Psoas muscle (tissue), 8 donors: ENCODE measurements at regions of chr1 and their contacts with region 1.

Region 1: GRCh38 chr1:207935166-207935583 is 24.2 kb upstream of the CD34 start:
- DNase-seq: no peak
- ATAC-seq: no peak
- H3K4me3 ChIP-seq: no peak overlapping the region
- H3K27ac ChIP-seq: no peak overlapping the region
- H3K4me1 ChIP-seq: no peaks in the 10 kb centered on the region
- H3K27me3 ChIP-seq: no peaks in the 10 kb centered on the region
- CTCF ChIP-seq: no peak

Region 2: DNA sequence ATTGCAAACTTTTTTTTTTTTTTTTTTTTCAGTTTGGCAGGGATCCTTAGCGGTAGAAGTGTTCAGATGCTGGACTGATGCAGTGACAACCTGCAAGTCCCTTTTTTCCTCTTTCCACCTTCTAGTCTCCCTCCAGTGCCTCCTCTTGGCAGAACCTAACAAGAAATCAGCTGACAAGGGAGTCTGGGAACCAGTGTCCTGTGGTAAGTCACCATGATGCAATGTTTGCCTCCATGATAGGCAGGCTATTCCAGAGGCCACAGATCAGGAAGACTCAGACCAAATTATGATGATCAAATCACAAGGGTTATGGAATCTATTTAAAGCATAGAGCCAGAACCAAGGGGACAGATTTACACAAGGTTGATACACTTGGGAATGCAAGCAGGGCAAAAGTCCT is 21.2 kb before region 1 on chr1:
- intact Hi-C with region 1: loop called in 1 of 2 experiments (anchors 1 kb)
- DNase-seq: no peak
- ATAC-seq: peak in 2 of 4 donors; percentile 15 to 26
- H3K4me3 ChIP-seq: no peak overlapping the region
- H3K27ac ChIP-seq: no peak overlapping the region
- H3K4me1 ChIP-seq: peaks cover 3% of the 10 kb centered on the region
- H3K27me3 ChIP-seq: peaks cover 0 to 25% (median 0%) of the 10 kb centered on the region in 3 donors
- CTCF ChIP-seq: no peak

Region 3: GRCh38 chr1:208047476-208047934 is 112.3 kb after region 1 on chr1:
- intact Hi-C with region 1: no loop called
- DNase-seq: peak; percentile 85 to 89
- ATAC-seq: peak; percentile 45 to 82 (median 76)
- H3K4me3 ChIP-seq: no peak overlapping the region
- H3K27ac ChIP-seq: peak overlapping the region; percentile 66
- H3K4me1 ChIP-seq: peaks cover 23% of the 10 kb centered on the region
- H3K27me3 ChIP-seq: no peaks in the 10 kb centered on the region
- CTCF ChIP-seq: no peak